Activated CD4-positive, alpha-beta T cell treated with anti-CD3 and anti-CD28 coated beads for 36 hours (primary cell): ENCODE measurements at regions of chr17 and their contacts with region 1.

Region 1: GRCh38 chr17:49210158-49211029 is at the starts of genes ABI3 and GNGT2:
- DNase-seq: peak; percentile 84
- ATAC-seq: peak; percentile 92
- H3K4me3 Mint-ChIP-seq: peak within 1 kb of the TSS; percentile 86
- H3K27ac Mint-ChIP-seq: peak within 1 kb of the TSS; percentile 97
- H3K4me1 Mint-ChIP-seq: peaks cover 62% of the 10 kb centered on the region
- H3K27me3 Mint-ChIP-seq: no peaks in the 10 kb centered on the region
- total RNA-seq, gene ABI3: 27.8 to 31.1 TPM
- total RNA-seq, gene GNGT2: 27.3 to 27.7 TPM

Region 2: GRCh38 chr17:48382989-48383388 is 827.4 kb before region 1 on chr17:
- CTCF ChIA-PET with region 1: no interaction called
- POLR2A ChIA-PET with region 1: no interaction called
- intact Hi-C with region 1: no loop called
- DNase-seq: no peak
- ATAC-seq: no peak
- H3K4me3 Mint-ChIP-seq: no peak overlapping the region
- H3K27ac Mint-ChIP-seq: no peak overlapping the region
- H3K4me1 Mint-ChIP-seq: peaks cover 28% of the 10 kb centered on the region
- H3K27me3 Mint-ChIP-seq: no peaks in the 10 kb centered on the region

Region 3: GRCh38 chr17:49223517-49224197 is 13.3 kb after region 1 on chr17:
- CTCF ChIA-PET with region 1: interaction called, 61 read pairs
- POLR2A ChIA-PET with region 1: interaction called, 4 read pairs
- intact Hi-C with region 1: loop called (anchors 1 to 2 kb)
- DNase-seq: peak; percentile 82
- ATAC-seq: peak; percentile 45
- H3K4me3 Mint-ChIP-seq: peak overlapping the region; percentile 42
- H3K27ac Mint-ChIP-seq: peak overlapping the region; percentile 35
- H3K4me1 Mint-ChIP-seq: peaks cover 28% of the 10 kb centered on the region
- H3K27me3 Mint-ChIP-seq: peaks cover 14% of the 10 kb centered on the region

Region 4: GRCh38 chr17:49556223-49556971 is 346.0 kb after region 1 on chr17:
- CTCF ChIA-PET with region 1: no interaction called
- POLR2A ChIA-PET with region 1: no interaction called
- intact Hi-C with region 1: no loop called
- DNase-seq: peak; percentile 92
- ATAC-seq: peak; percentile 96
- H3K4me3 Mint-ChIP-seq: no peak overlapping the region
- H3K27ac Mint-ChIP-seq: no peak overlapping the region
- H3K4me1 Mint-ChIP-seq: peaks cover 8% of the 10 kb centered on the region
- H3K27me3 Mint-ChIP-seq: peaks cover 3% of the 10 kb centered on the region